Breast epithelium (tissue), 4 donors: ENCODE measurements at regions of chr19 and their contacts with region 1.

Region 1: DNA sequence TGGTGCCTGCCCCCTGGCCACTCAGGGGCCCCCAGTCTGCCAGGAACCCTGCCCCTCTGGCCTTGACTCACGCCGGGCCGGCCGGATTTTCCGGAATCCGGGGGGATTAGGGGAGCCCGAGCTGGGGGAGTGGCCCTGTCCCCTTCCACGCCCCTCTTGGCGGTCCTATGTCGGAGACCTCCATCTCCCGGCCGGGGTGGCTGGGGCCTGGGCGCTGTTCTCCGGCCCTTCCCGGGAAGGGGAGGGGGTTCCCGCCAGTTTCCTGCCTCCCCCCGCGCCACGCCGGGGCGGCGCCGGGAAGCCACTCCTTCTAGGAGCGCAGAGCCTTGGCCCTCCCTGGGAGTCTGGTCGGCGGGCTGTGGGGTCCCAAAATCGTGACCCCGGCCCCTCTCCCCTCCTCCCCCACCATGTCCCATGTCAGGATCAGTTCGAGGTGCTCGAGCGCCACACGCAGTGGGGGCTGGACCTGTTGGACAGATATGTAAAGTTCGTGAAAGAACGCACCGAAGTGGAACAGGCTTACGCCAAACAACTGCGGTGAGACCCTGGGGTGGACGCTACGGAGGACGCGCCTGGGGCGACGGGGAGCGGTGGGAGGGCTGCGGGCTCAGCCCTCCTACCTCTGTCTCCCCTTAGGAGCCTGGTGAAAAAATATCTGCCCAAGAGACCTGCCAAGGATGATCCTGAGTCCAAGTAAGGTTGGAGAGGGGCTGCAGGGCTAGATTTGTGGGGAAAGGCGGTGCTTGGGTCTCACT is 1.3 kb downstream of the TRIP10 start:
- DNase-seq: no peak
- H3K4me3 ChIP-seq: peak overlapping the region; percentile 69 to 92 (median 80)
- H3K27ac ChIP-seq: peak overlapping the region; percentile 96 to 99
- H3K4me1 ChIP-seq: peaks cover 16 to 35% of the 10 kb centered on the region in 2 donors
- H3K27me3 ChIP-seq: no peaks in the 10 kb centered on the region
- CTCF ChIP-seq: no peak
- POLR2A ChIP-seq: peak; percentile 17

Region 2: GRCh38 chr19:5690125-5690954 is 1050.4 kb before region 1 on chr19 and contains the start of gene RPL36:
- intact Hi-C with region 1: loop called (anchors 10 kb)
- DNase-seq: peak; percentile 97 to 99
- H3K4me3 ChIP-seq: peak within 1 kb of the TSS; percentile 81 to 99 (median 85)
- H3K27ac ChIP-seq: peak within 1 kb of the TSS; percentile 97
- H3K4me1 ChIP-seq: peaks cover 7 to 8% of the 10 kb centered on the region in 2 donors
- H3K27me3 ChIP-seq: no peaks in the 10 kb centered on the region
- CTCF ChIP-seq: peak; percentile 97 to 99 (median 98)
- POLR2A ChIP-seq: peak; percentile 82
- total RNA-seq, gene RPL36: 687 to 1,274 (median 863) TPM

Region 3: GRCh38 chr19:5913739-5914357 is 826.9 kb before region 1 on chr19 and contains the start of gene CAPS:
- intact Hi-C with region 1: loop called (anchors 5 kb)
- DNase-seq: peak; percentile 37 to 63
- H3K4me3 ChIP-seq: peak within 1 kb of the TSS; percentile 0 to 44 (median 18)
- H3K27ac ChIP-seq: peak within 1 kb of the TSS; percentile 67 to 72
- H3K4me1 ChIP-seq: peaks cover 12 to 17% of the 10 kb centered on the region in 2 donors
- H3K27me3 ChIP-seq: no peaks in the 10 kb centered on the region
- CTCF ChIP-seq: no peak
- POLR2A ChIP-seq: no peak
- total RNA-seq, gene CAPS: 9.4 to 19.0 (median 16.4) TPM